Stomach (tissue), 19 donors: ENCODE measurements at regions of chr5 and their contacts with region 1.

Region 1: GRCh38 chr5:97162045-97162444 is 19.6 kb upstream of the LIX1 start:
- DNase-seq: peak; percentile 60 to 92
- H3K4me3 ChIP-seq: no peak overlapping the region
- H3K27ac ChIP-seq: no peak overlapping the region
- H3K4me1 ChIP-seq: peaks cover 0 to 23% (median 8%) of the 10 kb centered on the region in 4 donors
- H3K27me3 ChIP-seq: no peaks in the 10 kb centered on the region
- CTCF ChIP-seq: peak in 5 of 7 experiments; percentile 74 to 88 (median 82)
- EP300 ChIP-seq: no peak
- POLR2A ChIP-seq: no peak

Region 2: DNA sequence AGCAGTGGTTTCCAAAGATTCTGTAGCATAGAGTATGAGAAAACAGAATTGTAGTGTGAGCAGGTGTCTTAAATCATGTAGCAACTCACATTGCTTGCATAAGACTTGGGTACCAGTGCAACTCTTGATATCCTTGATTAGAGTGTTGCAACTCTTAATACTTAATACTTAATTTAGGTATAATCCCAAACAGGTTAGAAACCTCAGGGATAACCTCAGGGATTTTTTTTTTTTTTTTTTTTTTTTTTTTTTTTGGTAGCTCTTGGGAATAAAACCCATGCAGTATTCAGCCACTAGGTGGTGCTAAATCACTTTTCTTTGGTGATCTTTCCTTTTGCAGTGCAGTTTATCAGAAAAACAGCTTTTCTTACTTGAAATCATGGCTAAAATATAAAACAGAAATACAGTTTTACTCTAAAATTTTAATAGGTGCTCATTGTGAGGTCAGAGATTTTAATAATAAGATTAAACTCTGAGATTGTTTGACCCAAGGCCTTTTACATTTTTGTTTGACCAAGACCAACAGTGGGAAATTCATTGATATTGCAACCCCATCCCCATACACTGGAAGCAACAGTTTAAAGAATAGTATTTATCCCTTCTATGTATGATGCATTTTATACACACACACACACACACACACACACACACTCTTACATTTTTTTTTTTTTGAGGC is 409.6 kb before region 1 on chr5:
- intact Hi-C with region 1: loop called (anchors 5 kb)
- DNase-seq: peak in 1 of 2 donors; percentile 88
- H3K4me3 ChIP-seq: no peak overlapping the region
- H3K27ac ChIP-seq: no peak overlapping the region
- H3K4me1 ChIP-seq: peaks cover 0 to 13% (median 4%) of the 10 kb centered on the region in 4 donors
- H3K27me3 ChIP-seq: no peaks in the 10 kb centered on the region
- CTCF ChIP-seq: peak in 4 of 7 experiments; percentile 57 to 75 (median 67)
- EP300 ChIP-seq: no peak
- POLR2A ChIP-seq: no peak

Region 3: GRCh38 chr5:96868603-96869371 is 293.3 kb before region 1 on chr5:
- intact Hi-C with region 1: loop called (anchors 5 kb)
- DNase-seq: peak in 1 of 2 donors; percentile 83
- H3K4me3 ChIP-seq: no peak overlapping the region
- H3K27ac ChIP-seq: no peak overlapping the region
- H3K4me1 ChIP-seq: peaks cover 0 to 5% (median 0%) of the 10 kb centered on the region in 4 donors
- H3K27me3 ChIP-seq: no peaks in the 10 kb centered on the region
- CTCF ChIP-seq: peak in 5 of 7 experiments; percentile 84 to 92 (median 85)
- EP300 ChIP-seq: no peak
- POLR2A ChIP-seq: no peak

Region 4: GRCh38 chr5:97062046-97062445 is 100.0 kb before region 1 on chr5:
- intact Hi-C with region 1: no loop called
- DNase-seq: no peak
- H3K4me3 ChIP-seq: no peak overlapping the region
- H3K27ac ChIP-seq: no peak overlapping the region
- H3K4me1 ChIP-seq: no peaks in the 10 kb centered on the region
- H3K27me3 ChIP-seq: no peaks in the 10 kb centered on the region
- CTCF ChIP-seq: no peak
- EP300 ChIP-seq: no peak
- POLR2A ChIP-seq: no peak

Region 5: GRCh38 chr5:97906135-97906534 is 744.1 kb after region 1 on chr5:
- intact Hi-C with region 1: no loop called
- DNase-seq: peak in 1 of 2 donors; percentile 47
- H3K4me3 ChIP-seq: no peak overlapping the region
- H3K27ac ChIP-seq: peak overlapping the region in 2 of 5 donors; percentile 61 to 63
- H3K4me1 ChIP-seq: no peaks in the 10 kb centered on the region
- H3K27me3 ChIP-seq: no peaks in the 10 kb centered on the region
- CTCF ChIP-seq: no peak
- EP300 ChIP-seq: no peak
- POLR2A ChIP-seq: no peak